Activated CD4-positive, alpha-beta T cell treated with anti-CD3 and anti-CD28 coated beads, Interleukin-2, amount 10 ng/mL, durations not matched to agents 7 days and 5 days (primary cell): ENCODE measurements at regions of chr6 and their contacts with region 1.

Region 1: GRCh38 chr6:149043476-149044130 is 273.9 kb upstream of the TAB2 start:
- DNase-seq: peak; percentile 22
- H3K4me3 Mint-ChIP-seq: no peak overlapping the region
- H3K27ac Mint-ChIP-seq: no peak overlapping the region
- H3K4me1 Mint-ChIP-seq: peaks cover 54% of the 10 kb centered on the region
- H3K27me3 Mint-ChIP-seq: no peaks in the 10 kb centered on the region

Region 2: GRCh38 chr6:149032599-149033405 is 10.8 kb before region 1 on chr6:
- CTCF ChIA-PET with region 1: interaction called, 19 read pairs
- POLR2A ChIA-PET with region 1: no interaction called
- DNase-seq: peak; percentile 27
- H3K4me3 Mint-ChIP-seq: peak overlapping the region; percentile 64
- H3K27ac Mint-ChIP-seq: peak overlapping the region; percentile 92
- H3K4me1 Mint-ChIP-seq: peaks cover 69% of the 10 kb centered on the region
- H3K27me3 Mint-ChIP-seq: no peaks in the 10 kb centered on the region

Region 3: GRCh38 chr6:149054559-149055194 is 11.1 kb after region 1 on chr6:
- CTCF ChIA-PET with region 1: interaction called, 14 read pairs
- POLR2A ChIA-PET with region 1: no interaction called
- DNase-seq: no peak
- H3K4me3 Mint-ChIP-seq: no peak overlapping the region
- H3K27ac Mint-ChIP-seq: peak overlapping the region; percentile 57
- H3K4me1 Mint-ChIP-seq: peaks cover 33% of the 10 kb centered on the region
- H3K27me3 Mint-ChIP-seq: no peaks in the 10 kb centered on the region

Region 4: DNA sequence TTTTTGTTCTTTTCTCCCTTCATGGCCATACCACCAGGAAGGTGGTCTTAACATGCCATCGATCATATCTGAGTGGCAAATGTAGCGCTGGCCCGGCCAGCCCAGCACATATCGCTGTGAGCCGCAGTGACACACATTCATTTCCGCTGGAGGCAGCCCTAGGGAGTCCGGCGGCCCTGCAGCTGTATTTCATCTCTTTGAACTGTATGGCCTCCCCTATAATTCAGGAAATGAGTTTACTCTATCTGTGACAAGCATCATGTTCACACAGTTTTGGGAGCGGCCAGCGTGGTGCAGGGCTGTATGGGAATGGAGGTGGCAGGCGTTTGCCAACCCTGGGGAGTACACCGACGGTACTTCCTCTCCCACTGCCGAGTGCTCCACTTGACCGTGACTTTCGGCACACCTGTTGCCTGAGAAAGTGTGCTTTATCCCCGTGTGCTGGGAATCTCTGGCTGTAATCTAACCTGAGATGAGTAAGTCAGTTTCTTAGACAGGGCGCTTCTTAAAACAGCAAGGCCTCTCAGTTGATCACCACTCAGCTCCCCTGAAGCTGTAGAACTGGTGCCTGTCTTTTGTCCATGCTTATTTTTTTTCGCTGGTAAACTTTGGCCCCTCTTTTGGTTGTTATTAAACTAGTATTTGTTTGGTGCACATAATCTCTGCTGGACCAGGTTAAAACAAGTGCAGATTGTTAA is 16.8 kb after region 1 on chr6:
- CTCF ChIA-PET with region 1: interaction called, 14 read pairs
- POLR2A ChIA-PET with region 1: no interaction called
- DNase-seq: peak; percentile 59
- H3K4me3 Mint-ChIP-seq: peak overlapping the region; percentile 53
- H3K27ac Mint-ChIP-seq: peak overlapping the region; percentile 91
- H3K4me1 Mint-ChIP-seq: peaks cover 49% of the 10 kb centered on the region
- H3K27me3 Mint-ChIP-seq: no peaks in the 10 kb centered on the region

Region 5: DNA sequence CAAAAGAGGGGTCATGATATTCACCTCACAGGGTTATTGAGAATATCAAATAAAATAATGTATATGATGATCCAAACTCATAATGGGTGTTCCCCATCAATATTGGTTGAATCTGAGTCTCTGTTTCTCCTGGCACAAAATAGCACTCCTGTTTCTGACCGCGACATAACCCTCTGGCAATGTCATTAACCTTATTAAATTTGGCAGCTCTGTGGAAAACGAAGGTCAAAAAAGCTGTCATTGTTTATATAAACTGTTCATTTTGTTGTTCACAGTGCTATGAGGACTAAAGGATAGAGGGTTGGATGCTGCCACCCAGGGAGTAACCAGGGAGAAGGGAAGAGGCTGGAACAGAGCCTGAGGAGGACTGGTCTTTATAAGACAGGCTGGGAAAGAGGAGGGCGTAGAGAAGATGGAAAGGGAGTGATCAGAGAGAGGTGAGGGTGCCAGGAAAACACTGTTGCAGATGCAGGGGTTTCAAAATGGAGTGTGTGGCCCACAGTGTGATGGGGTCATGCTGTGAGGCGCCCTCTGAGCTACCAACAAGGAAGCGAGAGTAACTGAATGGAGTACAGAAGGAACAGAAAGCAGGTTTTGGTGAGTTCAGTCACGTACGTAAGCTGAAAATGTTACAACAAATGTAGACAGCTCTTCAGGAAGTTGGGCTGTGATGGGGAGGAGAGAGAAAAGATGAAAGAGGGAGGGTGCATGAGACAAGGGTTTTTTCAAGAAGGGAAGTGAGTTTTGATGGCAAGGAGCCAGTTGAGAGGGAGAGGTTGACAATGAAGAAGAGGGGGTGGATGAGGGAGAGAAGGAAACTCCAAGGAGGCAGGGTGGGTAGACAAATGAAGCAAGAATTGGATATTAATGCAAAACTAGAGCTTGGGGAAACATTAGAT is 22.3 kb after region 1 on chr6:
- CTCF ChIA-PET with region 1: interaction called, 14 read pairs
- POLR2A ChIA-PET with region 1: no interaction called
- DNase-seq: peak; percentile 67
- H3K4me3 Mint-ChIP-seq: peak overlapping the region; percentile 14
- H3K27ac Mint-ChIP-seq: peak overlapping the region; percentile 94
- H3K4me1 Mint-ChIP-seq: peaks cover 46% of the 10 kb centered on the region
- H3K27me3 Mint-ChIP-seq: no peaks in the 10 kb centered on the region

Region 6: GRCh38 chr6:149306967-149307366 is 263.4 kb after region 1 on chr6:
- CTCF ChIA-PET with region 1: no interaction called
- POLR2A ChIA-PET with region 1: no interaction called
- DNase-seq: no peak
- H3K4me3 Mint-ChIP-seq: no peak overlapping the region
- H3K27ac Mint-ChIP-seq: no peak overlapping the region
- H3K4me1 Mint-ChIP-seq: no peaks in the 10 kb centered on the region
- H3K27me3 Mint-ChIP-seq: no peaks in the 10 kb centered on the region

Region 7: DNA sequence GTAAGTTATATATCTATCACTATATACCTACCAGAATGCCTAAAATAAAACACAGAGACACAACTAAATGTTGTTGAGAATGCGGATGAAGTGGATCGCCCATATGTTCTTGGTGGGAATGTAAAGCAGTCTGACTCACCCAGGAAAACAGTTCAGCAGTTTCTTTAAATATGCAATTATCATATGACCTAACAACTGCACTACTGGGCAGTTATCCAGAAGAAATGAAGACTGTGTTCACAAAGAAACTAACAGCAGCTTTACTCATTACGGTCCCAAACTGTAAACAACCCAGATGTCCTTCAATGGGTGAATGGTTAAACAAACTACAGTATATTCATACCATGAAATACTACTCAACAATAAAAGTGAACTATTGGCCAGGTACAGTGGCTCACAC is 455.5 kb after region 1 on chr6:
- CTCF ChIA-PET with region 1: no interaction called
- POLR2A ChIA-PET with region 1: interaction called, 15 read pairs
- DNase-seq: no peak
- H3K4me3 Mint-ChIP-seq: no peak overlapping the region
- H3K27ac Mint-ChIP-seq: no peak overlapping the region
- H3K4me1 Mint-ChIP-seq: peaks cover 54% of the 10 kb centered on the region
- H3K27me3 Mint-ChIP-seq: no peaks in the 10 kb centered on the region